PC-3 (cell line): ENCODE measurements at regions of chr5 and their contacts with region 1.

Region 1: DNA sequence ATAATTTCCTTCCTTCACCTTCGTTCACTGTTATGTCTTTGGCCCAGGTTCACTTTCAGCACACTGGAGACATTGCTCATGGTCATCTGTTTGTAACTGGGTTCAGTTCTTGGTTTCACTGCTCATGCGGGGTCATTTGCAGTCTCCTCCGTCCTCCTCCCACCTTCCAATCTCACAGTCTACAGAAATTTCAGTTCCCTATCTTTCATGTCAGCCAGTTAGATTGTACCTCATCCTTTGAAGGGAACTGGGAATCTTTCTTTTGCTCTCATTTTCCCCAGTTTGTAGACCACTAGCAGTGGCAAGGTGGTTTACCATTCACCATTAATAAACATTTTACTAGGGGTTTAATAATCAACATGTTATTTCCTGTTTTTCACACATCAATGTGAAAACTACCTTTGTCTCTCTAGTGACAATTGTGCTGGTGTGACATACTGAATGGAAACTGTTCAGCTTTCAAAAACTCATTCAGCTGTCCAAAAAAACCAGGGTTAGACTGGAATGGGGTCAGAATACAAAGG is 100.9 kb upstream of the IL6ST start:
- DNase-seq: no peak
- ATAC-seq: no peak
- H3K4me3 ChIP-seq: no peak overlapping the region
- H3K27ac ChIP-seq: no peak overlapping the region
- H3K4me1 ChIP-seq: peaks cover 6% of the 10 kb centered on the region
- H3K27me3 ChIP-seq: no peaks in the 10 kb centered on the region
- CTCF ChIP-seq: no peak

Region 2: DNA sequence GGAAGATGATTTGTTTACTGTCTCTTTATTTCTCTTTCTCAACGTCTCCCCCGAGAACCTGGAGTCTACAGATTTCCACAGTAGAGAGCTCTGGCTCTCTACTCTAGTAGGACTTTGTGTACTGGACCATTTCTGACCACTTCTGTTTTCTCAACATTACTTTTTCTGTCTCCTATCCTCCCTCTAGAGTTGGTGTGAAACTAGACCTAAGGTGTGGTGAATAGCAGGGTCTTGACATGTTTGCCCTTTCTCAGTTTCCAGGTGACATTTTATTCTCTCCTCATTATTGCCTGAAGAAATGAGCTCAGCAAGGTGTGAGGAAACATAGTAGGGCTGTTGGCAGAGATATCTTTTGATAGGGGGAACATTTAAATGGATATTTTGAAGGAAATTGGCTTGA is 38.8 kb before region 1 on chr5:
- CTCF ChIA-PET with region 1: no interaction called
- POLR2A ChIA-PET with region 1: no interaction called
- intact Hi-C with region 1: loop called (anchors 1 kb)
- DNase-seq: no peak
- ATAC-seq: no peak
- H3K4me3 ChIP-seq: no peak overlapping the region
- H3K27ac ChIP-seq: no peak overlapping the region
- H3K4me1 ChIP-seq: peaks cover 15% of the 10 kb centered on the region
- H3K27me3 ChIP-seq: no peaks in the 10 kb centered on the region
- CTCF ChIP-seq: no peak

Region 3: DNA sequence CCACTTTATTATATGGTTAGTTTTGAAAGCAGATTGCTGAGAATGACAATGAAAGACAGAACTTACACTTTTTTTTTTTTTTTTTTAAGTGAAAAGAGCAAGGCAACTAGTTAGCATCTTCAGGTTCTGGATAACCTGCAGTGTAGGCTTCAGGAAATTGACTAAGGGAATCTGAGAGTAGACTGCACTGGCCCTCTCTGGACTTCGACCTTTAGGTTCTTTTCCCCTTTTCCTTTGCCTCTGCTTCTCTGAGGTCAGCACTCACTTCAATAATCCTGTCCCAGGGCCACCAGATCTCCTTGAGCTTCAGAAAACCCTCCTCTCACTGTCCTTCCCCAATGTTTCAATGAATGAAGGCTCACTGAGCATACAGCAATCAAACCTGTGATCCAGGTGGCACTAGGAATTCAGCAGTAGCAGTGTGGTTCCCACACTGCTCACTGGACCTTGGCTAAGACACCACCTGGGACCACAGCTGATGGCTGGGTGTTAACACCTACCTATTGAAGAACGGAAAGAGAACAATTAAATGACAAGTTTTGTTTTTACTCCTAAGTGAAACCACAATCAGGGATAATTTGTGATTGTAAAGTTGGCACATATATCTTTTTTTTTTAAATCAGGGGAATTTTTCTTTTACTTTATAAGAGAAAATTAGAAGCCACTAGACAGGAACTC is 15.1 kb before region 1 on chr5:
- CTCF ChIA-PET with region 1: no interaction called
- POLR2A ChIA-PET with region 1: no interaction called
- intact Hi-C with region 1: no loop called
- DNase-seq: no peak
- ATAC-seq: no peak
- H3K4me3 ChIP-seq: no peak overlapping the region
- H3K27ac ChIP-seq: no peak overlapping the region
- H3K4me1 ChIP-seq: no peaks in the 10 kb centered on the region
- H3K27me3 ChIP-seq: no peaks in the 10 kb centered on the region
- CTCF ChIP-seq: no peak

Region 4: DNA sequence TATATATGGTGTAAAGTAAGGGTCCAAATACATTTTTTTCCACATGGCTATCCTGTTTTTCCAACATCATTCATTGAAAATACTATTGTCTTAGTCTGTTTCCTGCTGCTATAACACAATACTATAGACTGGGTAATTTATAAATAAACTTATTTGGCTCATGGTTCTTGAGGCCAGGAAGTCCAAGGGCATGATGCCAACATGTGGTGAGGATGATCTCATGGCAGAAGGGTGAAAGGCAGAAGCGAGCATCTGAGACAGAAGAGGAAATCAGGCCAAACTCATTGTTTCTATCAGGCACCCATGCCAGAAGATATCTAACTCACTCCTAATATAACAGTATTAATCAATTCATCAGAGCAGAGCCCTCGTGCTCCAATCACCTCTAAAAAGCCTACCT is 94.9 kb after region 1 on chr5:
- CTCF ChIA-PET with region 1: no interaction called
- POLR2A ChIA-PET with region 1: no interaction called
- intact Hi-C with region 1: loop called (anchors 10 kb)
- DNase-seq: peak; percentile 64
- ATAC-seq: peak; percentile 33; the same call in 1 of the 2 replicates
- H3K4me3 ChIP-seq: no peak overlapping the region
- H3K27ac ChIP-seq: no peak overlapping the region
- H3K4me1 ChIP-seq: peaks cover 10% of the 10 kb centered on the region; the same call in 1 of the 2 replicates
- H3K27me3 ChIP-seq: no peaks in the 10 kb centered on the region
- CTCF ChIP-seq: no peak